AG04449 (cell line): ENCODE measurements at regions of chr10 and their contacts with region 1.

Region 1: GRCh38 chr10:13371897-13372470 is 23.9 kb upstream of the SEPHS1 start:
- DNase-seq: peak; percentile 33
- H3K4me3 ChIP-seq: no peak overlapping the region
- CTCF ChIP-seq: peak; percentile 83

Region 2: GRCh38 chr10:12214763-12215218 is 1157.2 kb before region 1 on chr10:
- CTCF ChIA-PET with region 1: no interaction called
- POLR2A ChIA-PET with region 1: no interaction called
- DNase-seq: no peak
- H3K4me3 ChIP-seq: no peak overlapping the region
- CTCF ChIP-seq: peak; percentile 17

Region 3: GRCh38 chr10:13247246-13247645 is 124.7 kb before region 1 on chr10:
- CTCF ChIA-PET with region 1: no interaction called
- POLR2A ChIA-PET with region 1: no interaction called
- DNase-seq: no peak
- H3K4me3 ChIP-seq: no peak overlapping the region
- CTCF ChIP-seq: no peak

Region 4: GRCh38 chr10:13348216-13349017 is 23.6 kb before region 1 on chr10 and contains the start of gene SEPHS1:
- CTCF ChIA-PET with region 1: interaction called, 10 read pairs
- POLR2A ChIA-PET with region 1: no interaction called
- DNase-seq: no peak
- H3K4me3 ChIP-seq: peak within 1 kb of the TSS; percentile 72
- CTCF ChIP-seq: no peak

Region 5: DNA sequence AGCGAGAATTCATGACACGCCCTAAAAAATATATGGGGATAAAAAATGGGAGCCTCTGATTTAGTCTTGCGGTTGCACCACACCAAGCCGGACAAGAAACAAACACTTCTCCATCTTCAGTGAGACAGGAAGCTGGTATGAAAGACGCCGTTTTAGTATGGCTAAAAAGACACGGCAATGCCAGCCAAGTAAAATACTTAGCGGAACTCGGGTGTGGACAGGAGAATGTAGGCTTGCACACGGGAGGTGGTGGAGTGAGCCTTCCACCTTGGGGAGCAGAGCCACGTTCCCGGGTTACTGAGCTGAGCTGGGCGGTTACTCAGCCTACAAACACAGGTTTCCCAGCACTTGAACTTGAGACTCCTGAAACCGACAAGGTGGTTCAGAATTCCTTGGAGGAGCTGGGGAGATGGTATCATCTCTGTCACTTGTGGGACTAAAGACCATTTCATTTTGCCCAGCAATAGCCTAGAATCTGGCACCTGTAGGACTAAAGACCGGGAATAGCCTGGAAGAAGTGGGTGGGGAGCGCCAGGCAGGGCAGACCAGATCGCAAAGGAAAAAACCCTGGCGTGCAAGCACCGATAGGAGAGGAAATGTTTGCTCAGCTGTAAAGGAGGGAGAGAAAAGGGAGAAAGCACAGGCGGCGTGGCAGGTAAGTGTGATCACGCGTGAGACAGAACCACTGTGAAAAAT is 10.9 kb after region 1 on chr10:
- CTCF ChIA-PET with region 1: interaction called, 64 read pairs
- POLR2A ChIA-PET with region 1: no interaction called
- DNase-seq: no peak
- H3K4me3 ChIP-seq: peak overlapping the region; percentile 15; the same call in 1 of the 2 replicates
- CTCF ChIP-seq: no peak

Region 6: DNA sequence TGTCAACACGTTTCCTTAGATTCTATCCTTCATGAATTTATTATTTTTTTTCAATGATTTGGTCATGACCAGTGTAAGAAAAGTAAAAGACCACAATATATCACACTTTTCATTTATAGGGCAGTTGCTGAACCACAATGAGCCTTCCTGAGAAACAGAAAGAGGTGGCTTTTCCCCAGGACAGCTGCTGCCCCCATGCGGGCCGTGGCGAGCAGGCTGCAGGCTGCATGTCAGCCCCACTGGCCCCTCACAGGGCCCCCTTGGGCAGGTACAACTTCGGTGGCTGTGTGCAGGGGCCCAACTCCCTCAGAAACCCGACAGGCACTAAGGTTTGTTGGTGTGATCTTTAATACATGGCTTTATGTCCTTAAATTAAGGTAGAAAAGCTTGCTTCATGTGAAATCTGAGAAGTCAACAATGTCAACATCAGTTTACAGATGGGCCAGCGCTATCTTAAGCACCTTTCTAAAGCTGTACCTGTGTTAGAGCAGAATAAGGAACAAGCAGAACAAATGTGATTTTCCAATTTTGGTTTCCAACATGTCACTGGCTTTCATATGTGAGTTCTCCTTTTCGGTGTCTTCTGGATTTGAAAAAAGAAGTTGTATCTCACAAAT is 146.2 kb after region 1 on chr10:
- CTCF ChIA-PET with region 1: interaction called, 15 read pairs
- POLR2A ChIA-PET with region 1: no interaction called
- DNase-seq: no peak
- H3K4me3 ChIP-seq: no peak overlapping the region
- CTCF ChIP-seq: peak; percentile 54

Region 7: DNA sequence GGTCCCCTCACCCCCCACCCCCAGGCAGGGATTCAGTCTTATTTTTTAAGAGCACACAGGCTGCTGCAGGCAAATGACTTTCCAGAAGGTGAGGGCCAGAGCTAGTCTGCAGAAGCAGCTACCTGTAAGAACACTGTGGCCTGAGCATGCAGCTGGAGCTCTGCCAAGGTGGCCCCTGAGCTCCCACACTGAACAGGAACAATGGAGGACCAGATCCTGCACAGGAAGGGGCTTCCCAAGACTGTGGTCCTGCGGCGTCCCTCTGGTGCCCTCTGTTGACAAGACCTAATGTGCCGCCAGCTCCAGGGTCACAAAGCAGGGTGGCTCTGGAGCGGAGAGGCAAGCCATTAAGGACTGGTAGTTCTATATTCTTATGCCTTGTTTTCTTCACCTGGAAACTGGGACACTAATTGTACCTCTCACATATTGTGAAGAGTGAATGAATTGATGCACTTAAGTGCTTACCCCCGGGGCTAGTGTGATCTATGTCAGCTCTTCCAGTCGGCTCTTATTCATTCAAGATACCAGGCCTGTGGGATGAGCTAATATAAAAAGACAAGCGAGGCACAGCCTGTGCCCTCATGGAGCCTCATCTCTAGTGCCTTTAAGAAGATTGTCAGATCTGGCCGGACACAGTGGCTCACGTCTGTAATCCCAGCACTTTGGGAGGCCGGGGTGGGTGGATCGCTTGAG is 164.8 kb after region 1 on chr10:
- CTCF ChIA-PET with region 1: interaction called, 101 read pairs
- POLR2A ChIA-PET with region 1: no interaction called
- DNase-seq: no peak
- H3K4me3 ChIP-seq: no peak overlapping the region
- CTCF ChIP-seq: peak; percentile 72